ENCODE measurements at regions of chr2 and their contacts with region 1.

Region 1: DNA sequence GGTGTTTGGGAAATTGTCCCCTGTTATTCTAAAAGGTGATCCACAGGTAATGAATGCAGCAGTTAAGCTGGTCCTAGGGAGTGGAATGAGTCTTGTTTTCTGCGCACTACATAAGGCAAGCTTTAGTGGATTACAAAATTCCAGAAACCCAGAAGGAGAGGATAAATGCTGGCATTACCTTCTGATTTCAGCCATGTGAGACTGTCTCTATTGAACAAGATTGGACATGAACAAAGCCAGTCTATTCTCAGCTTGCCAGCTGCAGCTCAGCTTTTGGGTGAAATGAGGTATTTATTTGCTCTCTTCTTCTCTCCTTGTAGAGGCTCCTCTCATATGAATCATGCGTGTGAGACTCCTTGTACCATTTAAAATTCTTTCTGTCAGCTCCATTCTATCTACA is 944.9 kb downstream of the CNTNAP5 start:
- DNase-seq: no peak
- H3K4me3 ChIP-seq: no peak overlapping the region
- CTCF ChIP-seq: no peak

Region 2: DNA sequence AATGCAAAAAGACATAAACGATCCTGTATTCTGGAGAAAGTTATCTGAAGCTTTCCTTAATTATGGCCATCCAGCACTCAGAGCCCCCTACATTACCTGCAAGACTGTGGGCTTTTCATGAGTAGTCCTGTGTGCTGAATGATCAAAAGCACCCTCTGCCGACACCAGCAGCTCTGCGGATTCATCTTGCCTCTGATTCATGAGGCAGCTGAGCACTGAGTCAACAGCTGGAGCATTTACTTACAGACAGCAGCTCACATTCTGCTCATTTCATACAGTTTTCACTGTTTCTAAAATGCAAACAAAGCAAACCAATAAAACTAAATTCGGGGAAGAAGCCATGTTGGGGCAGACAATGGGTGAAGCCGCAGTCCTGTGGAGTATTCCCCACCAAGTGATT is 58.5 kb before region 1 on chr2:
- in situ Hi-C with region 1: loop called (anchors 10 kb)
- DNase-seq: no peak
- H3K4me3 ChIP-seq: no peak overlapping the region
- CTCF ChIP-seq: no peak

Region 3: GRCh38 chr2:125004091-125004800 is 34.2 kb after region 1 on chr2:
- in situ Hi-C with region 1: no loop called
- DNase-seq: no peak
- H3K4me3 ChIP-seq: no peak overlapping the region
- CTCF ChIP-seq: no peak